KBM-7 (cell line): ENCODE measurements at regions of chr4 and their contacts with region 1.

Region 1: GRCh38 chr4:13548984-13549546 is 4.8 kb upstream of the NKX3-2 start:
- DNase-seq: peak; percentile 94

Region 2: DNA sequence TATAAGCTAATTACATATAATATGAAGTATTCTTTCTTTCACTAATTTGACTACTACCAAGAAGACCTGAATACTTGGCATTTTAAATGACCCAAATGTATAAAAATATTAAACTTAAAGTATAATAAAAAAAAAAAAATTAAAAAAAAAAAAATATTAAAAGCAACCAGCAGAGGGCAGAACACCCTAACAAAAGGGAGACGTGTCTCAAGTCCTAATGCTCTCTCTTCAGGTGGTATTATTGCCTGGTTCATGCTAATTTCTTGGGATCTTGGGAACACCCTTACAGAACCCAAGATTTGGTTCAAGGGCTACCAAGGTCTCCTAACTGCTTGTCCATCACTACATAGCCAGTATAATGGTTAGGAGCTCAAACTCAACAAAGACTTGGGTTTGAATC is 819.7 kb before region 1 on chr4:
- in situ Hi-C with region 1: loop called (anchors 25 kb)
- DNase-seq: peak; percentile 37

Region 3: GRCh38 chr4:12846368-12846767 is 702.7 kb before region 1 on chr4:
- in situ Hi-C with region 1: loop called (anchors 25 kb)
- DNase-seq: no peak

Region 4: GRCh38 chr4:13365195-13365594 is 183.9 kb before region 1 on chr4:
- in situ Hi-C with region 1: no loop called
- DNase-seq: no peak